ENCODE measurements at regions of chr10 and their contacts with region 1.

Region 1: GRCh38 chr10:43166880-43167497 is 28.7 kb downstream of the CSGALNACT2 start:
- DNase-seq: no peak
- H3K4me3 ChIP-seq: no peak overlapping the region
- H3K27ac ChIP-seq: no peak overlapping the region
- H3K4me1 ChIP-seq: no peaks in the 10 kb centered on the region; a peak in 1 of 7 replicates
- H3K27me3 ChIP-seq: no peaks in the 10 kb centered on the region
- CTCF ChIP-seq: no peak
- EP300 ChIP-seq: no peak
- POLR2A ChIP-seq: no peak
- RAD21 ChIP-seq: no peak

Region 2: GRCh38 chr10:43126759-43127424 is 40.1 kb before region 1 on chr10:
- CTCF ChIA-PET with region 1: no interaction called
- POLR2A ChIA-PET with region 1: no interaction called
- DNase-seq: peak in 1 of 2 experiments; percentile 39
- H3K4me3 ChIP-seq: no peak overlapping the region
- H3K27ac ChIP-seq: no peak overlapping the region
- H3K4me1 ChIP-seq: peaks cover 0 to 4% (median 1%) of the 10 kb centered on the region in 4 experiments; a peak in 1 of 7 replicates
- H3K27me3 ChIP-seq: no peaks in the 10 kb centered on the region
- CTCF ChIP-seq: no peak
- EP300 ChIP-seq: no peak
- POLR2A ChIP-seq: no peak
- RAD21 ChIP-seq: no peak

Region 3: DNA sequence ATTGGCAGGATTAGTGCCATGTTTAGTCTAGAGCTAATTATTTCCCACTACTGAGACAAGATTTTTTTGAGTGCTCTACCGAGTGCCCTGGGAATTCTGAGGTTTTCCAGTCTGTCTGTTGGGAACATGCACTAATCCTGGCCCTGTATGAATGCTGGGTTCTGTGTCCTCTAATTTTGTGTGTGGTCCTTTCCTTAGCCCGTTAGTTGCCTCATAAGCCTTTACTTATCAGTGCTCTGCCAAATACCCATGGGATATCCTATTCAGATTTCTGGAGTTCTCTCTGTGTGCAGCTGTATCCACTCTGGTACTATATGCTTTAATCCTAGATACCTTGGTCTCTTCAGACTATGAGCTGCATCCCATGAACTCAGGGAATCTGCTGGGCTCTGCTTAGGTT is 15.6 kb before region 1 on chr10:
- CTCF ChIA-PET with region 1: interaction called, 13 read pairs
- POLR2A ChIA-PET with region 1: no interaction called
- DNase-seq: no peak
- H3K4me3 ChIP-seq: no peak overlapping the region
- H3K27ac ChIP-seq: no peak overlapping the region
- H3K4me1 ChIP-seq: no peaks in the 10 kb centered on the region
- H3K27me3 ChIP-seq: no peaks in the 10 kb centered on the region
- CTCF ChIP-seq: no peak
- EP300 ChIP-seq: no peak
- POLR2A ChIP-seq: no peak
- RAD21 ChIP-seq: no peak

Region 4: DNA sequence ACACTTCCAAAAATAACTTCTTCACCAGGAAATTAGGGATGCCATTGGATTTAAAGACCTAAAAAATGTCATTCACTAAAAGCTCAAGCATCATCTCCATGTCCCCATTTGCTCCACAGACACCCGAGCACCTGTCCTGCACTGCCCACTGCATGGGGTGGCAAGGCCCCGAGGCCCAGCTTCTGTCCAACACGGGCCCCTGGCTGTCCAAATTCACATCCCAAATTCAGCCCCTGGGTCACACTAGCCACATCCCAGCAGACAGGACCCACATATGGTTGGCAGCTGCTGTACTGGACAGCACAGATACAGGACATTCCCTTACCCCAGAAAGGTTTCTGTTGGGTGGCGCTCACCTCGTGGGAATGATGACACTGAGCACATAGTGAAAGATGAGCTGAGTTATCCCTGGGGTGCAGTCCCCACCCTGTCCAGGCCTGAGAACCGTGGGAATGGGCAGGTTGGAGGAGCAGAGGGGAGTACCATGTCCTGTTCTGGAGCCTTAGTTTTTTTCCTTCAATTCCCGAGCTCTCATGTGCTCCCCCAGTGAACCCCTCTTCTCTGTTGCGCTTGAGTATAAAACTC is 26.6 kb after region 1 on chr10:
- CTCF ChIA-PET with region 1: interaction called, 16 read pairs
- POLR2A ChIA-PET with region 1: no interaction called
- DNase-seq: peak in 1 of 2 experiments; percentile 38
- H3K4me3 ChIP-seq: no peak overlapping the region
- H3K27ac ChIP-seq: no peak overlapping the region
- H3K4me1 ChIP-seq: peaks cover 0 to 3% (median 0%) of the 10 kb centered on the region in 4 experiments; a peak in 2 of 7 replicates
- H3K27me3 ChIP-seq: no peaks in the 10 kb centered on the region
- CTCF ChIP-seq: no peak
- EP300 ChIP-seq: no peak
- POLR2A ChIP-seq: no peak
- RAD21 ChIP-seq: no peak